Psoas muscle (tissue), 8 donors: ENCODE measurements at regions of chr3 and their contacts with region 1.

Region 1: DNA sequence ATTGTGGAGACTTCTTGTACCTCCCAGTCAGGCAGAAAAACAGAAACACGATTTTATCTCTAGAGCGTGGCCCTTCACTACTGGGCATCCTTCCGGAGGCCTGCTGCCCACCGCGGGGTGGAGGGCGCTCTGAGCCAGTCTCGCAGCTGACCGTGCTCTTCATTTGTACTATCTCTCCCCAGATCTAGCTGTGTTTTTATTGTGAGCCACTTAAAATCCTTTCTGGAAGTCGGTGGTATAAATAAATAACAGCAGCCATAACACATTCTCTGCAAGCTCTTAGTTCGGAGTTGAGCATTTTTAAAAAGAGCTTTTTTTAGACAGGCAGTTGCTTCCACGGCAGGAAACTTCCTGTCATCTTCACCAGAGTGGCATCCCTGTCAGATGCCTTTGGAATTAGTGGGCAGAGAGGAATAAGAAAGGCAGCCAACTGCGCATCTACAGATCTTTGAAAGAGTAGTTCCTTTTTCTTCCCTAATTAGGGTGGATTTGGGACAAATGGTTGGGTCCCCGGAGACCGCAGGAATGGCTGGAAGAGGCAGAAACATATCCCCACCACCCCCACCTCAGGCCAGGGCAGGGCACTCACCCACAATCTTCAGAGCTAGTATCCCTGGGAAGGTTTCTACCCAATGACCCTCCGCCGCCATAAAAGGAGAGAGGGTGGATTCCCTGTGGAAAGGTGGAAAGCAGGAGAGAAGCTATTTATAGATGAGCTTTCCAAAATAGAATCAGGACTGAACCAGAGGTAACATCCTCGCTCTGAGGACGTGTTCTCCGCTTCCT is 91.1 kb downstream of the TOP2B start:
- DNase-seq: no peak
- ATAC-seq: peak; percentile 72 to 87 (median 76)
- H3K4me3 ChIP-seq: no peak overlapping the region
- H3K27ac ChIP-seq: peak overlapping the region; percentile 84
- H3K4me1 ChIP-seq: peaks cover 18% of the 10 kb centered on the region
- H3K27me3 ChIP-seq: no peaks in the 10 kb centered on the region
- CTCF ChIP-seq: no peak

Region 2: DNA sequence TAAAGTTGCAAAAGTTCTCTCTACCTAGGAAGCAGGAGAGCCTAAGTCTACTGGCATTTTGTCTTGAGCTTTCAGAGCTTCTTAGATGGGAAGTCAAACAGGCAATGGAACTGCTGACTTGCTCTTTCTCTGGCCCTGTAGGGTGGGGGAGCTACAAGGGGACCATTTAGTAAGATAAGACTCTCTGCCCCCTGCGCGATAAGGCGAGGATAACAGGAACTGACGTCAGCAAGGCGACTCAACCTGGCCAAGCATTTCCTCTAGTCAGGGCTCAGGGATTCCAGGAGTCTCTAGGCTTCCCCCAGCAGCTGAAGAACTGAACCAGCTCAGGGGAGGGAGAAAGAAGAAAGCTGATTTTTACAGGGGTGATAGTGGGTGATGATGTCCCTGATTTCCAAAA is 139.7 kb before region 1 on chr3:
- intact Hi-C with region 1: loop called in 1 of 2 experiments (anchors 10 kb)
- DNase-seq: no peak
- ATAC-seq: peak in 3 of 4 donors; percentile 16 to 33 (median 31)
- H3K4me3 ChIP-seq: no peak overlapping the region
- H3K27ac ChIP-seq: no peak overlapping the region
- H3K4me1 ChIP-seq: peaks cover 16% of the 10 kb centered on the region
- H3K27me3 ChIP-seq: no peaks in the 10 kb centered on the region
- CTCF ChIP-seq: no peak

Region 3: DNA sequence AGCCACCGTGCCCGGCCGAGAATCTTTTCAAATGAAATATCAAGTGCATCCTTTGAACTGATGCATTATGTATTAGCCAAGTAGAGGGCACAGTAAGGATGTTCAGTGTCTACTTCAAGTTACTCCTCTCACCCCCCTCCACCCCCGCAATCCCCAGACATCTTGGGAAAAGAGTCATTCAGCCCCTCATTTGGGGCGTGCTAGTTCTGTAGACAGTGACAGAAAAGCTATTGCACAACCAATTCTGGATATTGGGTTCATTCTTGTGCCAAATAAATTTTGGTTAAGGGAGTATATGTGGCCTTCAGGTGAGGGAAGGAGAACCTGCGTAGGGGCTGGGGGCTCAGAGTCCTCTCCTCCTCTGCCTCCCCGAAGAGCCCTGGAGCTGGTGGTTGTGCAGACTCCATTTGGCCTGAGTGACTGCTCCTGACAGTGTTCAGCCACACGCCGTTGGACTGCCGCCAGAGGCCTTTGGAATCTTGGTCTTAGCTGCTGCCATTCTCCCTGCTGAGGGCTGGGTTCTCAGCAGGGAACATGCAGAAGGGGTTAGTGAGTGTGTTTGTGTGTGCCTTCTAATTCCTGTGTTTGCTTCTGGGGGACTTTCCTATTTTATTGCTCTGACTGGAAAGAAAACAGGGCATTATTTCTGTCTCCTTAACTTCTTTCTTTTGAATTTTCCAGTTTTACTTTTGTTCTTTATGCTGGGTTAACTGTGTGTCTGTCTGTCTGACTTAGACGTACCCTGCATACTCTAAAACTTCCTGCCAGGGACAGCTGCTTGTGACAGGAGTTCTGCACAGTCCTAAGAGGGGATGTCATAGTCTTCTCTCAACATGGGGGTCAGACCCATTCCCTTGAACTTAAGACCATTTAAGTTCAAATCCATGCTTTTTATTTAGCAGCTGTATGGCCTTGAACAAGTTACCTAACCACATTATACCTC is 124.6 kb before region 1 on chr3:
- intact Hi-C with region 1: loop called in 1 of 2 experiments (anchors 5 kb)
- DNase-seq: peak; percentile 85 to 94
- ATAC-seq: peak; percentile 84 to 94 (median 90)
- H3K4me3 ChIP-seq: no peak overlapping the region
- H3K27ac ChIP-seq: peak overlapping the region; percentile 74
- H3K4me1 ChIP-seq: peaks cover 36% of the 10 kb centered on the region
- H3K27me3 ChIP-seq: no peaks in the 10 kb centered on the region
- CTCF ChIP-seq: no peak

Region 4: DNA sequence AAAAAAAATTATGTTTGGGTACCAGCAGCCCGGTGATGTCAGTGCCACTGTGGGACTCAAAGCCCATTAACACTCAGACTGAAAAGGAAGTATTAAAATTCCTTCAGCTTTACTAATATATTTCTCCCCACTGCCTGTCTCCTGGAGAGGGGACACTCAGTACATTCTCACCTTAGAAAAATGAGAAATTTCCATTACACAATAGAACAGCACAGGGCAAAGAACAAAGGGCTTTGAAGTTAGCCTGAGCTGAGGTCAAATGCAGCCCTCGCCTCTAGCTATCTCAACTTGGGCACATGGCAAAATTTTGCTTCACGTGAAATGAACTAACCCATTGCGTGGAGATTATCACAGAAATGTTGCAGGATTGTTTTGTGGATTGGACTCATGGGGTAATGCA is 64.7 kb before region 1 on chr3:
- intact Hi-C with region 1: loop called in 1 of 2 experiments (anchors 5 kb)
- DNase-seq: no peak
- ATAC-seq: peak; percentile 4 to 58 (median 46)
- H3K4me3 ChIP-seq: no peak overlapping the region
- H3K27ac ChIP-seq: peak overlapping the region; percentile 66
- H3K4me1 ChIP-seq: peaks cover 39% of the 10 kb centered on the region
- H3K27me3 ChIP-seq: no peaks in the 10 kb centered on the region
- CTCF ChIP-seq: no peak

Region 5: GRCh38 chr3:25515171-25515570 is 58.4 kb before region 1 on chr3:
- intact Hi-C with region 1: loop called (anchors 5 kb)
- DNase-seq: no peak
- ATAC-seq: peak in 2 of 4 donors; percentile 18 to 27
- H3K4me3 ChIP-seq: no peak overlapping the region
- H3K27ac ChIP-seq: peak overlapping the region; percentile 79
- H3K4me1 ChIP-seq: peaks cover 34% of the 10 kb centered on the region
- H3K27me3 ChIP-seq: no peaks in the 10 kb centered on the region
- CTCF ChIP-seq: no peak